Activated CD8-positive, alpha-beta T cell treated with anti-CD3 and anti-CD28 coated beads, Interleukin-2, amount 10 ng/mL, durations not matched to agents 7 days and 5 days (primary cell): ENCODE measurements at regions of chr12 and their contacts with region 1.

Region 1: DNA sequence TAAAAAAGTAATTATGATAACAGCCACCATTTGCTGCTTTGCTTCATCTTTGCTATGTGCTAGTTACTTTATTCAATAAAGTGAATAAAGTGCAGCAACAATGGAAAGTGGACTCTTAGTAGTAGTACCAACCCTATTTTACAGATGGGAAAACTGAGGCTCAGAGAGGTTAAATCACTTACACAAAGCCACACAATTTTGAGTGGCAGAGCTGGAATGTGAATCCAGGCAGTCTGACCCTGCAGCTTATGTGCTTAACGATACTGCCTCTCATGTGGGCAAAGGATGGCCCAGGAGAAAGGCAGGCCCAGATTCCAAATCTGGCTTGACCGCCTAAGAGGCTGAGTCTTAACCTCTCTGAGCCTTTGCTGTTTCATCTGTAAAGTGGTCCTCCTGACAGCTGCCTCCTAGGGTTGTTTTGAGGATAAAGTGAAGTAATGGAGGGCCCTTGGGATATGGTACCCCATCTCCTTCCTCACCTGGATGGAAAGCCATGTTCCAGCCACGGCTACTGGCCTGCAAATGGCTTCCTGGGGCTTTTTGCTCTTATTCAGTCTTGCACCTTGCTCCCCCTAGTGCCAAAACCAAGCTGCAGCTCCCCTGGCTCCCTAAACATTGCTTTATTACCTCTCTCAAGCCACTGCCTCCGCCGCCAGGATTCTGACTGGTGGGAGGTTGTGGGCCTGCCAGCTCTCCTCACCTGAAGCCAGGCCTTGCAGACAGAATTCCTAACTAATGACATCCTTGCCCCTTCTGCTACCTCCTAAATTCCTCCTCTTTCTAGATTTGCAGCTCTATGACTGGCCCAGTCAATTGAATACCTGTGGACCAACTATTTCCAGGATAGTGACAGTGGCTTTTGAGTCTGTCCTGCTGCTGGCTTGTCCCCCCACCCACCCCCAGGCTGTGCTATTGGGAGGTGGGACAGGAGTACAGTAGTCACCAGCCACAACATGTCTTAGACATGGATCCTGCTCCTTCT is 283.3 kb upstream of the PWP1 start:
- DNase-seq: peak; percentile 79
- ATAC-seq: peak; percentile 71
- H3K4me3 Mint-ChIP-seq: no peak overlapping the region
- H3K27ac Mint-ChIP-seq: peak overlapping the region; percentile 39
- H3K4me1 Mint-ChIP-seq: peaks cover 55% of the 10 kb centered on the region
- H3K27me3 Mint-ChIP-seq: no peaks in the 10 kb centered on the region

Region 2: GRCh38 chr12:107126796-107127481 is 275.4 kb before region 1 on chr12:
- CTCF ChIA-PET with region 1: interaction called, 143 read pairs
- POLR2A ChIA-PET with region 1: no interaction called
- DNase-seq: no peak
- ATAC-seq: no peak
- H3K4me3 Mint-ChIP-seq: no peak overlapping the region
- H3K27ac Mint-ChIP-seq: no peak overlapping the region
- H3K4me1 Mint-ChIP-seq: no peaks in the 10 kb centered on the region
- H3K27me3 Mint-ChIP-seq: peaks cover 21% of the 10 kb centered on the region

Region 3: DNA sequence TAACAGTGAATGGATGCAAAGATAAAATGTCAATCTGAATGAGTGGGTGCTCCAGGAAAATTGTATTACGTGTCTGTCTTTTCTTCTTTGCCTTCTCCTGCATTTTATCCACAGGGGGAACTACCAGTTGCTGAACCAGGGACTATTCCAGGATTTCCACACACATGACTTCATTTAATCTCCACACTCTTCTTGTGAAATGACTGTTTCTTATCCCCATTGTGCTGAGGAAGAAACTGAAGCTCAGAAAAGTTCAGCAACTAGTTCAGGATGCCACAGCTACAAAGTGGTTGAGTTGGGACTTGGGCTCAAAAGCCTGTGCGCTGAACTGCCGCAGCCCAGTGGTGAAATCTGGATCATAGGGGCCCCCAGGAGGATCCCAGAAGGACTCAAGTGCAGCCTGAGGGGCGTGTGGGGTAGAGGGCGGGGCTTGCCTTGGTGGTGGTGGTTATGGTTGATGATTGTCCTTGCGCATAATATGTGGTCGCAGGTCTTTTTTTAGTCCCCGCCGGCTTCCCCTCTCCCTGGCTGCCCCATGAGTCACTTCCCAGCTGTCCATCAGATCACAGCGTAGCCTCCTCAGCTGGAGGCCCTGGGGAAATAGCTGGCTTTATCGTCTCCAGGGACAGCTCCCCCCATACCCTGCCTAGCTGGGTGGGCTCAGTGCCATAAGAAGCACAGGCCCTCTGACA is 73.7 kb before region 1 on chr12:
- CTCF ChIA-PET with region 1: interaction called, 182 read pairs
- POLR2A ChIA-PET with region 1: interaction called, 4 read pairs
- DNase-seq: peak; percentile 48
- ATAC-seq: peak; percentile 40
- H3K4me3 Mint-ChIP-seq: no peak overlapping the region
- H3K27ac Mint-ChIP-seq: no peak overlapping the region
- H3K4me1 Mint-ChIP-seq: peaks cover 90% of the 10 kb centered on the region
- H3K27me3 Mint-ChIP-seq: no peaks in the 10 kb centered on the region

Region 4: DNA sequence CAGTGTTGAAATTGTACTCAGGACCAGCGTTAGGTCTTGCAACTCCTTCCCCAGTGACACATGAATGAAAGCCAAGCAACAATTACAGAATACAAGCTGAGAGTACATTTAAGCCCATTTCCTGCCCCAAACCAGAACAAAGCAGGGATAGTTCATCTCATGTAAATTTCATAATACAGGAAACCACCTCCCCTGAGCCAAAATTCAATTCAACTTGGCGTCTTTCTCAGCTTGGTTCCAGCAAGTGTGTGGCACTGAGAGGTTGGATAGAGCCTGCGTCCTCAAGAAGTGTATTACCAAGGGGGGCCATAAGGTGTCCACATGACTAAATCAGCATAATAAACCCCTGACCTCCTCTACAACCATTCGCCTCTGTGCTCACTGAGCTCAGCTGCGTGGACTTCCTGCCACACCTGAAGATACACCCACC is 30.1 kb before region 1 on chr12:
- CTCF ChIA-PET with region 1: interaction called, 51 read pairs
- POLR2A ChIA-PET with region 1: interaction called, 16 read pairs
- DNase-seq: peak; percentile 73
- ATAC-seq: peak; percentile 59
- H3K4me3 Mint-ChIP-seq: peak overlapping the region; percentile 68
- H3K27ac Mint-ChIP-seq: peak overlapping the region; percentile 95
- H3K4me1 Mint-ChIP-seq: peaks cover 75% of the 10 kb centered on the region
- H3K27me3 Mint-ChIP-seq: no peaks in the 10 kb centered on the region

Region 5: DNA sequence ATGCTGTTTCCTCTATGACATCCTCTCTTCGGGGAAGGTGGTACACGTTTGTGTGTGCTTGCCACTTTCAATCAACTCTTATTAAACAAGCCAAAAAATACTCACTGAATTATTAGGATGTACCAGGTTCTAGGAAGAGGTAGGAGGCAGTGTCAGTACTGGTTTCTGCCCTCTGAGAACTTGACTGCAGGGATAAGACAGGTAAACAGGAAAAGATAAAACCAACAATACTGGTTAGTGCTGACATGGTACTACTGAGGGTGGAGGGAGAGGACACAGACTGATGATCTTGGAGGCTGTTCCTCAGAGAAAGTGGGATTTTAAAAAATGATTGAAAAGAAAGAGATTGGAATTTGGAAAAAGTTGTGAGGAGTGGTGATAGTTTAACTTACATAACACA is 11.9 kb before region 1 on chr12:
- CTCF ChIA-PET with region 1: interaction called, 17 read pairs
- POLR2A ChIA-PET with region 1: interaction called, 3 read pairs
- DNase-seq: no peak
- ATAC-seq: no peak
- H3K4me3 Mint-ChIP-seq: no peak overlapping the region
- H3K27ac Mint-ChIP-seq: peak overlapping the region; percentile 27
- H3K4me1 Mint-ChIP-seq: peaks cover 75% of the 10 kb centered on the region
- H3K27me3 Mint-ChIP-seq: no peaks in the 10 kb centered on the region